Endothelial cell of umbilical vein (primary cell): ENCODE measurements at regions of chr9 and their contacts with region 1.

Region 1: GRCh38 chr9:109817846-109818472 is 38.0 kb downstream of the PALM2AKAP2 start:
- DNase-seq: peak; percentile 88
- H3K4me3 ChIP-seq: no peak overlapping the region
- H3K27ac ChIP-seq: peak overlapping the region; percentile 44
- H3K4me1 ChIP-seq: peaks cover 24% of the 10 kb centered on the region
- H3K27me3 ChIP-seq: no peaks in the 10 kb centered on the region
- CTCF ChIP-seq: peak; percentile 62 to 86
- POLR2A ChIP-seq: no peak

Region 2: GRCh38 chr9:109574068-109574882 is 243.7 kb before region 1 on chr9:
- CTCF ChIA-PET with region 1: interaction called, 91 read pairs
- POLR2A ChIA-PET with region 1: no interaction called
- dilution Hi-C with region 1: no loop called
- intact Hi-C with region 1: loop called (anchors 1 kb)
- DNase-seq: peak; percentile 52
- H3K4me3 ChIP-seq: no peak overlapping the region
- H3K27ac ChIP-seq: no peak overlapping the region
- H3K4me1 ChIP-seq: no peaks in the 10 kb centered on the region
- H3K27me3 ChIP-seq: no peaks in the 10 kb centered on the region
- CTCF ChIP-seq: peak; percentile 37 to 47
- POLR2A ChIP-seq: no peak

Region 3: GRCh38 chr9:109806506-109807115 is 11.3 kb before region 1 on chr9:
- CTCF ChIA-PET with region 1: interaction called, 24 read pairs
- POLR2A ChIA-PET with region 1: no interaction called
- dilution Hi-C with region 1: no loop called
- intact Hi-C with region 1: no loop called
- DNase-seq: no peak
- H3K4me3 ChIP-seq: no peak overlapping the region
- H3K27ac ChIP-seq: no peak overlapping the region
- H3K4me1 ChIP-seq: no peaks in the 10 kb centered on the region
- H3K27me3 ChIP-seq: peaks cover 22 to 24% of the 10 kb centered on the region in 2 experiments
- CTCF ChIP-seq: no peak
- POLR2A ChIP-seq: no peak

Region 4: DNA sequence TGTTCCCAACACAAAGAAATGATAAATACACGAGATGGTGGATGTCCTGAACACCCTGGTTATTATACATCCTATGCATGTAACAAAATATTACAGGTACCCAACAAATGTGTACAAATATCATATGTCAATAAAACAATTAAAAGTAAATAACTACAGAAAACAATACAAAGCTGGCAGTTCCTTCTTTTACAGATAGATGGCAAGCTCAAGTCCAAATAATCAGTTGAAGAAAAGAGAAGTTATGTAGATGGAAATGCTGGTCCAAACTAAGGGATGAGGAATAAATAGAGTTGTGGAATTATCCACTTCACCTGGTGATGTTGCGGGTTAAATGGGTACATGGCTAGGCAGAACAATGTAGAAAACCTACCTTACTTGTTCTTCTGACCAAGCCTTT is 41.5 kb after region 1 on chr9:
- CTCF ChIA-PET with region 1: interaction called, 12 read pairs
- POLR2A ChIA-PET with region 1: no interaction called
- dilution Hi-C with region 1: no loop called
- intact Hi-C with region 1: no loop called
- DNase-seq: no peak
- H3K4me3 ChIP-seq: no peak overlapping the region
- H3K27ac ChIP-seq: no peak overlapping the region
- H3K4me1 ChIP-seq: no peaks in the 10 kb centered on the region
- H3K27me3 ChIP-seq: peaks cover 14 to 23% of the 10 kb centered on the region in 2 experiments
- CTCF ChIP-seq: no peak
- POLR2A ChIP-seq: no peak

Region 5: GRCh38 chr9:110217656-110218099 is 399.7 kb after region 1 on chr9:
- CTCF ChIA-PET with region 1: interaction called, 16 read pairs
- POLR2A ChIA-PET with region 1: no interaction called
- dilution Hi-C with region 1: no loop called
- intact Hi-C with region 1: loop called (anchors 5 kb)
- DNase-seq: peak; percentile 65
- H3K4me3 ChIP-seq: no peak overlapping the region
- H3K27ac ChIP-seq: no peak overlapping the region
- H3K4me1 ChIP-seq: no peaks in the 10 kb centered on the region
- H3K27me3 ChIP-seq: peaks cover 4 to 11% of the 10 kb centered on the region in 2 experiments
- CTCF ChIP-seq: peak; percentile 47 to 62
- POLR2A ChIP-seq: no peak